GM12878 (cell line): ENCODE measurements at regions of chr7 and their contacts with region 1.

Region 1: GRCh38 chr7:149422129-149422913 is 38.5 kb downstream of the ZNF777 start:
- DNase-seq: peak; percentile 9
- ATAC-seq: peak; percentile 98
- H3K4me3 ChIP-seq: peak overlapping the region; percentile 57
- H3K27ac ChIP-seq: no peak overlapping the region
- H3K4me1 ChIP-seq: no peaks in the 10 kb centered on the region
- H3K27me3 ChIP-seq: no peaks in the 10 kb centered on the region
- CTCF ChIP-seq: peak; percentile 26 to 92 (median 67); a peak in 5 of 6 replicates
- EP300 ChIP-seq: no peak
- POLR2A ChIP-seq: peak; percentile 74
- RAD21 ChIP-seq: peak; percentile 59

Region 2: DNA sequence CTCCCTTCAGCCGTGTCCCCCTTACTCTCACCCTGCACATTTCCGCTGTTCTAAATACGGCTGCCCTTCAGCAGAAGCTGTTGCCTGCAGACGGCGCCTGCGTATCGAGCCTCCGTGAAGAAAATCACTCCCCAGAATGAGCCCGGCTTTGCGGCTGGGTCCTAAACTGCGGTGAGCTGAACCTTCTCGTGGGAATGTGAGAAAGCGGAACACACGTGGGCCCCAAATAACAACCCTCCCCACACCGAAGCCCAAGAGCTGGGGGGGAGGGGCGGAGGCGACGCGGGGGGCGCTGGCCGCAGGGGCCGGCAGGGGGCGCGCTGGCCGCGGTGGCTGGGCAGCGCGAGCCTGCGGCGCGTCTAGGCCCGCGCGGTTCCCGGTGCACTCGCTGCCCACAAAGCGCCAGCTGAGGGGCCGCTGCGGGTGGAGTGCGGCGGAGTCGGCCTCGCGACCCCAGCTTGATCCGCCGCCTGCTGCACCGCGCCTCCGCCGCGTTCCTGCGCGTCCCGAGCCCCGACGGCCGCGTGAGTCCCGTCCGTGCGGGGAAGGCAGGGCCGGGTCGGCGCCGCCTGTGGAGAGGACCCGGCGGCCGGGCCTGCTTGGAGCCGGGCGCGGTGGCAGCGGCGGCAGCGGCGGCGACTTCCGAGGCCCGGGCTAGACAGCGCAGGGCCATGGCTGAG is 275.1 kb before region 1 on chr7 and contains the start of gene ZNF398:
- CTCF ChIA-PET with region 1: no interaction called
- POLR2A ChIA-PET with region 1: no interaction called
- RAD21 ChIA-PET with region 1: no interaction called
- SMC1A ChIA-PET with region 1: interaction called, 3 read pairs
- in situ Hi-C with region 1: no loop called
- intact Hi-C with region 1: loop called (anchors 10 kb)
- DNase-seq: peak; percentile 69
- ATAC-seq: peak; percentile 78
- H3K4me3 ChIP-seq: peak within 1 kb of the TSS; percentile 80
- H3K27ac ChIP-seq: peak within 1 kb of the TSS; percentile 94
- H3K4me1 ChIP-seq: peaks cover 5% of the 10 kb centered on the region
- H3K27me3 ChIP-seq: no peaks in the 10 kb centered on the region
- CTCF ChIP-seq: peak; percentile 57 to 67 (median 60); a peak in 5 of 6 replicates
- EP300 ChIP-seq: peak in 1 of 2 experiments; percentile 63; a peak in 2 of 4 replicates
- POLR2A ChIP-seq: peak; percentile 86
- RAD21 ChIP-seq: no peak
- polyA plus RNA-seq, gene ZNF398: 2.3 to 2.5 TPM

Region 3: DNA sequence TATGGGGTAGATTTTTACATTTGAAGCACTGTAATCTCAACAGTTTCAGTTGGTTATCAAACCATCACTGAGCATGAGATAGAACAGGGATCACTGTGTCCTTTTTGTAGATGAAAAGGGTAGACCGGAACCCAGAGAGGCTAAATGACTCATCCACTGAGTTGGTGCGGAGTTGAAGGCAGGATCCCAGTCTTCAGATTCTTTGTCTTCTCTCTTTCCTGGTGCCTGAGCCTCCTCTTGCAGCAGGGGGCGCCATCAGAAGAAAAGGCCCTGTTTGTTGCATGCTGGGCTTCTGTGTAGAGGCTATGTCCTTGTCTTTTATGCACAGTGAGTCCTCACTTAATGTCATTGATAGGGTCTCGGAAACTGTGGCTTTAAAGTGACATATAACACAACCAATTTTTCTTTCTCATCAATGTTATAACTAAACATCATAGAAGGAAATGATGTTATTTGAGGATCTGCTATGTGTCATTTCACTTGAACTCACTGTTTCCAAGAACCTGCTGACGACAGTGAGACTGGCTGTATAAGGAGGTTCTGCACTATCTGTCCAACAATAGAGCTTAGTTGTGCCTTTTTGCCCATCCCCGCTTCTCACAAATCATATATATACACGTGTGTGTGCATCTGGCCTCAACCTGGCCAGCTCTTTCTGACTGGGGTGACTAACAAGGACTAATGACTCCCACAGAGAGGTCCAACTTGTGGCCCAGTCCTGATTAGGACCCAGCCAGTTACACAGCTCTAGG is 212.6 kb before region 1 on chr7:
- CTCF ChIA-PET with region 1: no interaction called
- POLR2A ChIA-PET with region 1: no interaction called
- RAD21 ChIA-PET with region 1: no interaction called
- SMC1A ChIA-PET with region 1: no interaction called
- in situ Hi-C with region 1: no loop called
- intact Hi-C with region 1: no loop called
- DNase-seq: no peak
- ATAC-seq: peak; percentile 82
- H3K4me3 ChIP-seq: no peak overlapping the region
- H3K27ac ChIP-seq: no peak overlapping the region
- H3K4me1 ChIP-seq: no peaks in the 10 kb centered on the region
- H3K27me3 ChIP-seq: no peaks in the 10 kb centered on the region
- CTCF ChIP-seq: peak; percentile 48 to 68 (median 64)
- EP300 ChIP-seq: no peak
- POLR2A ChIP-seq: no peak
- RAD21 ChIP-seq: peak; percentile 51

Region 4: GRCh38 chr7:149310113-149310836 is 112.0 kb before region 1 on chr7:
- CTCF ChIA-PET with region 1: interaction called, 12 read pairs
- POLR2A ChIA-PET with region 1: no interaction called
- RAD21 ChIA-PET with region 1: interaction called, 4 read pairs
- SMC1A ChIA-PET with region 1: no interaction called
- in situ Hi-C with region 1: no loop called
- intact Hi-C with region 1: loop called (anchors 5 kb)
- DNase-seq: peak; percentile 36
- ATAC-seq: peak; percentile 86
- H3K4me3 ChIP-seq: no peak overlapping the region
- H3K27ac ChIP-seq: no peak overlapping the region
- H3K4me1 ChIP-seq: no peaks in the 10 kb centered on the region
- H3K27me3 ChIP-seq: no peaks in the 10 kb centered on the region
- CTCF ChIP-seq: peak; percentile 40 to 58 (median 42); a peak in 5 of 6 replicates
- EP300 ChIP-seq: no peak
- POLR2A ChIP-seq: no peak
- RAD21 ChIP-seq: peak; percentile 52

Region 5: GRCh38 chr7:149497456-149498261 is 75.3 kb after region 1 on chr7 and contains the start of gene ZNF746:
- CTCF ChIA-PET with region 1: interaction called, 5 read pairs
- POLR2A ChIA-PET with region 1: no interaction called
- RAD21 ChIA-PET with region 1: no interaction called
- SMC1A ChIA-PET with region 1: interaction called, 3 read pairs
- in situ Hi-C with region 1: no loop called
- intact Hi-C with region 1: loop called (anchors 5 kb)
- DNase-seq: peak; percentile 11
- ATAC-seq: peak; percentile 93
- H3K4me3 ChIP-seq: peak within 1 kb of the TSS; percentile 87
- H3K27ac ChIP-seq: peak within 1 kb of the TSS; percentile 67
- H3K4me1 ChIP-seq: peaks cover 14% of the 10 kb centered on the region
- H3K27me3 ChIP-seq: no peaks in the 10 kb centered on the region
- CTCF ChIP-seq: peak; percentile 55 to 83 (median 70)
- EP300 ChIP-seq: no peak
- POLR2A ChIP-seq: peak; percentile 76
- RAD21 ChIP-seq: peak; percentile 59
- polyA plus RNA-seq, gene ZNF746: 1.2 to 1.3 TPM

Region 6: DNA sequence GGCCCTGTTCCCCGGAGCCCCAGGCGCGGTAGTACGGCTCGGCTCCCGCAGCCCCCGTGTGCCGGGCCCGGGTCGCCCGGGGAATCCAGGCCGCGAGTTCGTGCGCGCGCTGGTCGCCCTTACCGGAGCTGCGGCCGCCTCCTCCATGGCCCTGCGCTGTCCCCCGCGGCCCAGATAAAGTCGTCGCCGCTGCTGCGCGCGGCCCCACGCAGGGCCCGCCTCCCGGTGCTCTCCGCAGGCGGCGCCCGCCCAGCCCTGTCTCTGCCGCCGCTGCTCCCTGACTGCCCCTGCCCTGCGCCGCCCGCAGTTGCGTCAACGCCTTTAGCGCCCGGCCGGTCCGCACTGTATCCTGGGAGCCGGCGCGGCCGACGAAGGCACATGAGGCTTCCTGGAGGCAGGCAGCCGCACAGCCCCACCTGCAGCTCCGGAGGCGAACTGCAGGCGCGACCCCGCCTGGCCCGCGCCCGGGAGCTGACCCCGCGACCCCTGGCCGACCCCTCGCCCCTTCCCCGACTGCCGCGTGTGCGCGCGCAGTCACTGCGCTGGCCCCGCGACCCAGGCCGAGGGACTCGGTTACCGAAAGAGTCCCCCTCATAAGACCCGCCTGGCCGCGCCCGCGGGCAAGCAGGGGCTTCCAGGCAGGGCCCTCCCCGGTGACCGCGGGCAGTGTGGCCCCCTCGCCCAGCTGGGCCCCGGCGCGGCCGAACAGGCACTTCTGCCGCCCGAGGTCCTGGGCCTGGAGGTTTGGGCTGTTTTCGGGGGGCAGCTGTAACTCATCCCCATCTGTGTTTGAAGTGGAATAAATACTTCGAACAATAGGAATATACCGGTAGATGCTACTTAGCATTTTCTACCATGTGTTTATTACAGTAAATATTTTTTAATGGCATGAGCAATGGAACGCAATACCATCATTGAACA is 202.4 kb after region 1 on chr7:
- CTCF ChIA-PET with region 1: interaction called, 6 read pairs
- POLR2A ChIA-PET with region 1: no interaction called
- RAD21 ChIA-PET with region 1: interaction called, 7 read pairs
- SMC1A ChIA-PET with region 1: interaction called, 6 read pairs
- in situ Hi-C with region 1: no loop called
- intact Hi-C with region 1: loop called (anchors 2 kb)
- DNase-seq: peak; percentile 50
- ATAC-seq: peak; percentile 92
- H3K4me3 ChIP-seq: peak overlapping the region; percentile 99
- H3K27ac ChIP-seq: peak overlapping the region; percentile 74
- H3K4me1 ChIP-seq: peaks cover 24% of the 10 kb centered on the region
- H3K27me3 ChIP-seq: peaks cover 0 to 3% of the 10 kb centered on the region in 2 experiments; a peak in 2 of 4 replicates
- CTCF ChIP-seq: peak; percentile 78 to 88 (median 84)
- EP300 ChIP-seq: no peak
- POLR2A ChIP-seq: peak; percentile 97
- RAD21 ChIP-seq: peak; percentile 44